Activated CD4-positive, alpha-beta memory T cell treated with anti-CD3 and anti-CD28 coated beads for 36 hours (primary cell): ENCODE measurements at regions of chr7 and their contacts with region 1.

Region 1: DNA sequence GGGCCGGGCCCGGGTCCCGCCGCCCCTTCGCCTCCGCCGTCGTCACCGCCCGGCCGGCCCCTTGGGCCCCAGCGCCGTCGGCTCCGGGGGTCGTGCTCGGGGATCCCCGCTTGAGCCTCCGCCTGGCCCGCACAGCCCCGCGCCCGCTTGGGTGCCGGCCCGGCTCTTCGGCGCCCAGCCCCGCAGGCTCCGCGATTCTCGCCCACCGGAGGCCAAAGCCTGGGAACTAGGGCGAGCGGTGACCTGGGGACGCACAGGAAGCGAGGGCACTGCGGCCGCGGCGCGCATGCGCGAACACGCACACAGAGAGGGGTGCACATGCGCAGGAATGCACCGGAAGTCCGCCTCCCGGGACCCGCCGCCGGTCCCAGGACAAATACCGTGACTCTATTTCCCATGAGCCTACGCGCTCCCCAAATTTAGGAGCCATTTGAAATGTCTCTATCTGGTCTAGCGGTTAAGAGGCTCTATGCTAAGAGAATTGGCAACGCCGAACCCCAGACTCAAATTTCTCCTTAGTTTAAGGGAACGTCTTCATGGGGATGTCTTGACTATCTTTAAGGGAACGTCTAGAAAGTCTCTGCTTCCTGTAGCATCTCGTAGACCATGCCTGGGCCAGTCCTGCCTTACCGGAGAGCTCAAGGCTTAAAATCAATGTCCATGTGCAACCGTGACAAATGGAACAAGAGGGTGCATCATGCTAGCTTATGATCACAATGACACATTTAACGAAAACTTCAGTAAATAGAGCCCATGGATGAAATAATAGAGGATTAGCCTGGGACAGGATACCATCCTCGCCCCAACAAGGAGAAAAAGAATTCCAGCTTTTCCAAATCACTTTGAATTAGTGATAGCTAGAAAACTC is at the start of gene ZNF12:
- DNase-seq: peak; percentile 98
- H3K4me3 Mint-ChIP-seq: peak within 1 kb of the TSS; percentile 83
- H3K27ac Mint-ChIP-seq: peak within 1 kb of the TSS; percentile 90
- H3K4me1 Mint-ChIP-seq: peaks cover 38% of the 10 kb centered on the region
- H3K27me3 Mint-ChIP-seq: no peaks in the 10 kb centered on the region
- total RNA-seq, gene ZNF12: 14.9 to 15.2 TPM

Region 2: GRCh38 chr7:6691609-6692106 is 15.3 kb before region 1 on chr7:
- CTCF ChIA-PET with region 1: no interaction called
- POLR2A ChIA-PET with region 1: no interaction called
- intact Hi-C with region 1: loop called (anchors 2 kb)
- DNase-seq: no peak
- H3K4me3 Mint-ChIP-seq: peak overlapping the region; percentile 26
- H3K27ac Mint-ChIP-seq: peak overlapping the region; percentile 38
- H3K4me1 Mint-ChIP-seq: no peaks in the 10 kb centered on the region
- H3K27me3 Mint-ChIP-seq: no peaks in the 10 kb centered on the region

Region 3: DNA sequence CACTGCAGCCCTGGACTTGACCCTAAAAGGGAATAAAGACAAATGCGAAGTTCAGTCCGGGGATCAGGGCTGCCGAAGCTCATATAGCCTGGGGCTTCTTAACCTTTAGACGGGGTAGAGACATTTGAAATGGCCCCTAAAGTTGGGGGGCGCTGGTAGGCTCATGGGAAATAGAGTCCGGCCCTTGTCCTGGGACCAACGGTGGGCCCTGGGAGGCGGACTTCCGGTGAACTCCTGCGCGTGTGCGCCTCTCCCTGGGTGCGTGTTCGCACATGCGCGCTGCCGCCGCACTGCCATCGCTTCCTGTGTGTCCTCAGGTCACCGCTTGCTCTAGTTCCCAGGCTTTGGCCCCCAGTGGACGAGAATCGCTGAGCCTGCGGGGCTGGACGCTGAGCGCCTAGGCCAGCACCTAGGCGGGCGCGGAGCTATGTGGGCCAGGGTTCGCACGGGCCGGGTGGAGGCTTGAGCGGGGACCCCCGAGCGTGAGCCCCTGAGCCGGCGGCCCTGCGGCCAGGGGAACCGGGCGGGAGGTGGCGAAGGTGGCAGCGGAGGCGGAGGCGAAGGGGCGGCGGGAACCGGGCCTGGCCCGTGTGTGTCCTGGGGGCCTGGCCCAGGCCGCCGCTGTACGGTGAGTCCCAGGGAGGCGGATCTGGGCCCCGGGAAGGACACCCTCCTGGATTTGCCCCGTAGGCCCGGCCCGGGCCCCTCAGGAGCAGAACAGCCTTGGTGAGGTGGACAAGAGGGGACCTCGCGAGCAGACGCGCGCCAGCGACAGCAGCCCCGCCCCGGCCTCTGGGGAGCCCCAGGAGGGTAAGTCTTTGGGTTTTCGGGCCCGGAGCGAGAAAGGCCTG is 22.8 kb after region 1 on chr7:
- CTCF ChIA-PET with region 1: no interaction called
- POLR2A ChIA-PET with region 1: interaction called, 3 read pairs
- intact Hi-C with region 1: loop called (anchors 1 kb)
- DNase-seq: peak; percentile 90
- H3K4me3 Mint-ChIP-seq: peak overlapping the region; percentile 92
- H3K27ac Mint-ChIP-seq: peak overlapping the region; percentile 82
- H3K4me1 Mint-ChIP-seq: peaks cover 17% of the 10 kb centered on the region
- H3K27me3 Mint-ChIP-seq: no peaks in the 10 kb centered on the region